ENCODE measurements at regions of chr2 and their contacts with region 1.

Region 1: DNA sequence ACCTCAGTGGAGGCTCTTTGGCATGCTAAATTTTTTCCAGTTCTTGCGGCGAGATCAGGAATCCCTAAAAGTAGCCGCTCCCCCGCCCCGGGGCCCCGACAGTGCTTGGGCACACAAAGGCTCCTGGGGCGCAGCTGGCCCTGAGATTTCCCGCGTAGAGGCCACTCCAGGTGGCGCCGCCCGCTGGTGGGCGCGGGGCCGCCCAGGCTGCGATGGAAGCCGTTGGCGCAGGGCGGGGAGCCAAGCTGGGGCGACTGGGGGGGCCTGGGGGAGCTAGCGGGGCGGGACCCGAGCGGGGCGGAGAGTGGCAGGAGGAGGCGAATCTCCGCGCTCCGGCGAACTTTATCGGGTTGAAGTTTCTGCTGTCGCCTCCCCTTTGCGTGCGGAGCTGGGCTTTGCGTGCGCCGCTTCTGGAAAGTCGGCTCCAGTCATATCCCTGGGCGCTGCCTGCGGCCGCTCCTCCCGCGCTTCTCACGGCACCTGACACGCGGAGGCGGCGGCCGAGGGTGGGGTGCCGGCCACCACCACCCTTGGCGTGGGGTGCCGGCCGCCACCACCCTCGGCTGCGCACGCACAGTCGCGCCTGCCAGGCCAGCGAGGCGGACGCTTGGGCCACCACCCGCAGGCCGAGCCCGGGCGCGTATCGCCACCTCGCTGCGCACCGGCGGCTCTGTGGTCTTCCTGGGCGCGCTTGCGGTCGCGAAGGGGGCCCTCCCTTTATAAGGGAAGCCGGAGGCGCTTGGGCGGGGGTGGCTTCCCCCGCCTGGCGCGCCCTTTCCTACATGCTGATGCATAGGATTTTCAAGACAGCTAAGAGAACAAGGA is 867 bp upstream of the CYP1B1 start:
- DNase-seq: peak; percentile 90
- ATAC-seq: peak; percentile 75
- H3K4me3 Mint-ChIP-seq: peak overlapping the region; percentile 71
- H3K27ac Mint-ChIP-seq: peak overlapping the region; percentile 88
- H3K4me1 Mint-ChIP-seq: peaks cover 24% of the 10 kb centered on the region
- H3K27me3 Mint-ChIP-seq: peaks cover 64% of the 10 kb centered on the region

Region 2: GRCh38 chr2:37925063-37925897 is 151.5 kb before region 1 on chr2 and contains the start of gene RMDN2:
- CTCF ChIA-PET with region 1: interaction called, 3 read pairs
- POLR2A ChIA-PET with region 1: no interaction called
- intact Hi-C with region 1: loop called in 1 of 2 experiments (anchors 1 kb)
- DNase-seq: peak; percentile 89
- ATAC-seq: peak; percentile 90
- H3K4me3 Mint-ChIP-seq: peak within 1 kb of the TSS; percentile 97
- H3K27ac Mint-ChIP-seq: peak within 1 kb of the TSS; percentile 96
- H3K4me1 Mint-ChIP-seq: peaks cover 9% of the 10 kb centered on the region
- H3K27me3 Mint-ChIP-seq: peaks cover 3% of the 10 kb centered on the region
- total RNA-seq, gene RMDN2: 2.5 to 2.7 TPM

Region 3: DNA sequence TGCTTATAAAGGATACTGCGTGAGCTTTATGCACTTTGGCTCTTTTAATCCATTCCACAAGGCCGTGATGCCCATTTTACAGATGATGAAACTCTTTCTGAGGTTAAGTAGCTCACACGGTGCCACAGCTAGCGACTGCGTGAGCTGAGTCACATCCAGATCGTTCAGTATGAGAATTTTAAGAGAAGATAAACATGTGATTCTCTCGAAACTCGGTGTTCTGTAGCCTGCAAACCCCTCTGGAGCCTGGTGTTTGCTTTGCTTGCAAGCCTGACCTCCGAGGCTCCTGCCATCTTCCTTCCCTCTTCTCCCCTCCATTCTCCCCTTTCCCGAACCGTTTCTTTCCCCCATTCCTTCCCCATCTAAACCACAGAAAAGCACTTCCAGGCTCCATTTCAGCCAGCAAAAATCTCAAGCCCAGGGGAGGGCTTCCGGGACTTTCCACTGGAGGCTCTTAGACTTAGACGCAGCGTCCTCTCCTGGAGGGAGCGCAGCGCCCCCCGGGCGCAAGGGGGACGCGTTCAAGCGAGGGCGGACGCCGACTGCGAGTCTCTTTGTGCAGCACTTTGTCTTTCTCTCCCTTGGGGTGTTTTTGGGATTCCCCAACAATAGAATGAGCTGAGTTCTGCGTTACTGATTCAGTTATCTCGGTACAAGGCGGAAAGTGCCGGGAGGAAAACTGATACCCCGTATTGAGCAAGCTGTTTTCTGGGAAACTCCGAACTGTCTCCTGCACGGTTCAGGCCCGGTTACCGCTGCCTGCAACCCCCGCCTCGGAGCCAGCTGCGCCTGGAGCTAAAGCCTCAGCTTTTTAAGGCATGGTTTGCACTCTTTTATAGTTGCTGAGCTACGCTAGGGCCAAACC is 38.8 kb before region 1 on chr2:
- CTCF ChIA-PET with region 1: interaction called, 4 read pairs
- POLR2A ChIA-PET with region 1: no interaction called
- intact Hi-C with region 1: loop called (anchors 1 to 5 kb)
- DNase-seq: peak; percentile 71
- ATAC-seq: peak; percentile 92
- H3K4me3 Mint-ChIP-seq: peak overlapping the region; percentile 46
- H3K27ac Mint-ChIP-seq: peak overlapping the region; percentile 69
- H3K4me1 Mint-ChIP-seq: peaks cover 27% of the 10 kb centered on the region
- H3K27me3 Mint-ChIP-seq: peaks cover 38% of the 10 kb centered on the region

Region 4: DNA sequence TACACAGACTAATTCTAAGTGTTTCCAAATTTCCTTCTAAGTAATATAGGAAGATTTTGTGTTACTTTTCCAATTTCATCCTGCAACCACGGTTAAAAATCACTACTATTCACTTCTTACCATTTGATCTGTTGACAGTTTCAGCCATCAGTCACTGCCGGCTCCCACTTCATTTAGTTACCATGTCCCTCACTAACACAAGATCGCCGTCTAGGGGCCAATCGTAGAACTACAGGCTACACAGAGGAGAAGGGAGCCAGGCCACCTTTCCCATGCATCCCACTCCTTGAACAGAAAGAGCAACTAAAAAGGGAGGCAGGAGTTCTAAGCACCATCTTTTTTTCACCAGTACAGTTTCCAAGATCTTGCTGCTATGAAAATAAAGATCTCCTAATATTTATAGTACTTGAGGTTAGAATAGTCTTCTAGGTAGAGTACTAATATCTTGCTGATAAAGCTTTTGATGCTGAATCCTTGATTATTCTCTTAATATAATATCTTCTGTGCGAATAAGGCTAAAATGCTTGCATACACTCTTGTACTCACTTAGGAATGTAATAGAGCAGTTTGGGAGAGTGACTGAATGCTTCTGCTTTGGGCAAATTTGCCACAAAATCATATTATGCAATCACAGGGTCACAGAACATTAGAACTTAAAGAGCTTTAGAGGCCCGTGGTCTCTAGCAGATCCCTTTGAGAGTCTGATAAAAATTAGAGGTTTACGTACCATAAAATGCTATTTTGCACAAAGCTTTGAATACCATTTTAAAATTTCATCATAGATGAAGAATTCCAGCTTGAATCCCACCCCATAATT is 38.6 kb after region 1 on chr2:
- CTCF ChIA-PET with region 1: interaction called, 7 read pairs
- POLR2A ChIA-PET with region 1: no interaction called
- intact Hi-C with region 1: loop called in 1 of 2 experiments (anchors 2 kb)
- DNase-seq: peak; percentile 88
- ATAC-seq: peak; percentile 63
- H3K4me3 Mint-ChIP-seq: no peak overlapping the region
- H3K27ac Mint-ChIP-seq: no peak overlapping the region
- H3K4me1 Mint-ChIP-seq: no peaks in the 10 kb centered on the region
- H3K27me3 Mint-ChIP-seq: peaks cover 22% of the 10 kb centered on the region

Region 5: GRCh38 chr2:38274286-38275276 is 197.8 kb after region 1 on chr2:
- CTCF ChIA-PET with region 1: interaction called, 3 read pairs
- POLR2A ChIA-PET with region 1: no interaction called
- intact Hi-C with region 1: loop called (anchors 1 to 10 kb)
- DNase-seq: peak; percentile 42
- ATAC-seq: no peak
- H3K4me3 Mint-ChIP-seq: no peak overlapping the region
- H3K27ac Mint-ChIP-seq: no peak overlapping the region
- H3K4me1 Mint-ChIP-seq: peaks cover 3% of the 10 kb centered on the region
- H3K27me3 Mint-ChIP-seq: no peaks in the 10 kb centered on the region

Measured in activated CD4-positive, alpha-beta T cell treated with anti-CD3 and anti-CD28 coated beads for 36 hours (primary cell).